MCF 10A (cell line): ENCODE measurements at regions of chr6 and their contacts with region 1.

Region 1: GRCh38 chr6:36594029-36594815 is at the start of gene SRSF3:
- DNase-seq: peak; percentile 98
- H3K4me3 Mint-ChIP-seq: peak within 1 kb of the TSS; percentile 84
- H3K27ac Mint-ChIP-seq: peak within 1 kb of the TSS; percentile 99
- H3K4me1 Mint-ChIP-seq: peaks cover 20% of the 10 kb centered on the region
- H3K27me3 Mint-ChIP-seq: no peaks in the 10 kb centered on the region
- CTCF ChIP-seq: no peak
- total RNA-seq, gene SRSF3: 364 and 479 TPM in 2 replicates

Region 2: GRCh38 chr6:35817515-35817914 is 776.7 kb before region 1 on chr6:
- CTCF ChIA-PET with region 1: no interaction called
- POLR2A ChIA-PET with region 1: no interaction called
- intact Hi-C with region 1: no loop called
- DNase-seq: no peak
- H3K4me3 Mint-ChIP-seq: no peak overlapping the region
- H3K27ac Mint-ChIP-seq: no peak overlapping the region
- H3K4me1 Mint-ChIP-seq: no peaks in the 10 kb centered on the region
- H3K27me3 Mint-ChIP-seq: no peaks in the 10 kb centered on the region
- CTCF ChIP-seq: no peak

Region 3: DNA sequence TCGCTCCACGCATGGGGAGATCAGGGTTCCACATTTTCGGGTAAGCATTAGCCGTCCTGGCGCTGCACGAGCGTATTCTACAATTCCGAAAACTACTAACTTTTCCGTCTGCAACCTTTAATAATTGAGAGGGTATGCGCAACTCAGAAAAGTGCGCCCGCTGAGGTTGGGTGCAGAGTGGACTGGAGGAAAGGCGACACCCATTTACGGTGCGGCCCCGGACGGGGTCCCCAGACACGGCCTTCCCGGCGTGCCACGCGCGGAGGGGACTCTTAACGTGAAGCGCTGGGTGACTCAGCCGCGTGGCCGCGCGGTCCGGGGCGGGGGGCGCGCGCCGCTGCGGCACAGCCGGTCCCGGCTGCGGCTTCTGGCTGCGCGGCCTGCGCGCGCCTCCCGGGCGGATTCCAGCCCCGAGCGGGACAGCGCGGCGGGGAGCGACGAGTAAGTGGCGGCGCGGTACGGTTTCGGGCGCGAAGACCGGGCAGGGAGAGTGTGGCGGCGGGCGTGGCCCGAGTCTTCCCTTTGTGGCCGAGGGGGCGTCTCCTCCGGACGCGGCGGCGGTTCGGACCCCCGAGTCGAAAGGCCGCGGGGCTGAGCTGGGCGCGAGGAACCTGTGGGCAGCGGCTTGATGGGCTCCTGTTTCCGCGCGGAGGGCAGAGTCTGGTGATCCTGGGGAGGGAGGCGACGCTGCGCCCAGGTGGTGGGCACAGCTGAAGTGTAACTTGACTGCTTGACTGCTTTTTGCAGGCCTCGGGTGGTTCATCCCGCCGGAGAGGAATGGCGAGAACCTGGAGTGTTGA is 151.4 kb before region 1 on chr6 and contains the starts of genes KCTD20 and PXT1:
- CTCF ChIA-PET with region 1: interaction called, 3 read pairs
- POLR2A ChIA-PET with region 1: interaction called, 19 read pairs
- intact Hi-C with region 1: loop called (anchors 5 kb)
- DNase-seq: peak; percentile 83
- H3K4me3 Mint-ChIP-seq: peak within 1 kb of the TSS; percentile 87
- H3K27ac Mint-ChIP-seq: peak within 1 kb of the TSS; percentile 88
- H3K4me1 Mint-ChIP-seq: peaks cover 27% of the 10 kb centered on the region
- H3K27me3 Mint-ChIP-seq: no peaks in the 10 kb centered on the region
- CTCF ChIP-seq: no peak
- total RNA-seq, gene KCTD20: 46.6 and 52.0 TPM in 2 replicates
- total RNA-seq, gene PXT1: 0.15 TPM in 1 of 2 replicates, not detected in the other

Region 4: DNA sequence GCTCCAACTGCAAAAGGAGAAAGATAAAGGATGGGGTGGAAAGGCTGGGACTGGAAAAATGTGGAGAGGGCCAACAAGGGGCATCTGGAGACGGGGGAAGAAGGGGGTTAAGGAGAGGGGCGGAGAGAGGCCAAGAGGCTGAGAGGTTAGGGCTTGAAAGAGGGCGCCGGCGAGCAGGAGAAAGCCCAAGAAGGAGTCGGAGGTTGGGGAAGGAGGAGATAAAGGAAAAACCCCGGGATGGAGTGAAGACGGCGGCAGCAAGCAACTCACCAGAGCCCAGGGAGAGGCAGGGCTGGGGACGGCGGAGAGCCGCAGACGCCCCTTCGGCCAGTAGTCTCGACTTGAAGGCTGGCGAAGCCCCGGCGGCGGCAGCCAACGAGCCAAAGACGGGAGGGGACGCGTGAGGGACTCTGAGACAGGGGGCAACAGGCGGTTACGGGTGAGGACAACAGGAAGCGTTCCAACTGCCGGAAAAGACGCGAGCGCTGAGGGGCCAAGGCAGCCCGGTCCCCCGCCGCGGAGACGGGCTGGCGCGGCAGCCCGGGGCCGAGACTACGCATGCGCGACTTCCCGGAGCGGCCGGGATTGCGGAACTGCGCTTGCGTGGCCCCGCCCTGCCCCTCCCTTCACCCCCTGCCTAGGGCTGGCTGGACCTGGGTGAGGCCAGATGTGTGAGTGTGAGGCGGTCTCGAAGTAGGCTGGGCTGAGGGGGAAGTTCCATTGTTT is 47.1 kb before region 1 on chr6 and contains the start of gene STK38:
- CTCF ChIA-PET with region 1: interaction called, 5 read pairs
- POLR2A ChIA-PET with region 1: interaction called, 96 read pairs
- intact Hi-C with region 1: loop called (anchors 1 kb)
- DNase-seq: peak; percentile 91
- H3K4me3 Mint-ChIP-seq: peak within 1 kb of the TSS; percentile 91
- H3K27ac Mint-ChIP-seq: peak within 1 kb of the TSS; percentile 93
- H3K4me1 Mint-ChIP-seq: peaks cover 12% of the 10 kb centered on the region
- H3K27me3 Mint-ChIP-seq: no peaks in the 10 kb centered on the region
- CTCF ChIP-seq: peak; percentile 20
- total RNA-seq, gene STK38: 16.8 and 20.0 TPM in 2 replicates

Region 5: GRCh38 chr6:36576561-36576960 is 17.7 kb before region 1 on chr6:
- CTCF ChIA-PET with region 1: interaction called, 5 read pairs
- POLR2A ChIA-PET with region 1: interaction called, 72 read pairs
- intact Hi-C with region 1: no loop called
- DNase-seq: no peak
- H3K4me3 Mint-ChIP-seq: no peak overlapping the region
- H3K27ac Mint-ChIP-seq: peak overlapping the region; percentile 81
- H3K4me1 Mint-ChIP-seq: peaks cover 20% of the 10 kb centered on the region
- H3K27me3 Mint-ChIP-seq: no peaks in the 10 kb centered on the region
- CTCF ChIP-seq: no peak

Region 6: GRCh38 chr6:36605560-36606391 is 11.6 kb after region 1 on chr6:
- CTCF ChIA-PET with region 1: interaction called, 22 read pairs
- POLR2A ChIA-PET with region 1: interaction called, 203 read pairs
- intact Hi-C with region 1: no loop called
- DNase-seq: no peak
- H3K4me3 Mint-ChIP-seq: no peak overlapping the region
- H3K27ac Mint-ChIP-seq: no peak overlapping the region
- H3K4me1 Mint-ChIP-seq: peaks cover 32% of the 10 kb centered on the region
- H3K27me3 Mint-ChIP-seq: no peaks in the 10 kb centered on the region
- CTCF ChIP-seq: no peak